ENCODE measurements at regions of chr14 and their contacts with region 1.

Region 1: DNA sequence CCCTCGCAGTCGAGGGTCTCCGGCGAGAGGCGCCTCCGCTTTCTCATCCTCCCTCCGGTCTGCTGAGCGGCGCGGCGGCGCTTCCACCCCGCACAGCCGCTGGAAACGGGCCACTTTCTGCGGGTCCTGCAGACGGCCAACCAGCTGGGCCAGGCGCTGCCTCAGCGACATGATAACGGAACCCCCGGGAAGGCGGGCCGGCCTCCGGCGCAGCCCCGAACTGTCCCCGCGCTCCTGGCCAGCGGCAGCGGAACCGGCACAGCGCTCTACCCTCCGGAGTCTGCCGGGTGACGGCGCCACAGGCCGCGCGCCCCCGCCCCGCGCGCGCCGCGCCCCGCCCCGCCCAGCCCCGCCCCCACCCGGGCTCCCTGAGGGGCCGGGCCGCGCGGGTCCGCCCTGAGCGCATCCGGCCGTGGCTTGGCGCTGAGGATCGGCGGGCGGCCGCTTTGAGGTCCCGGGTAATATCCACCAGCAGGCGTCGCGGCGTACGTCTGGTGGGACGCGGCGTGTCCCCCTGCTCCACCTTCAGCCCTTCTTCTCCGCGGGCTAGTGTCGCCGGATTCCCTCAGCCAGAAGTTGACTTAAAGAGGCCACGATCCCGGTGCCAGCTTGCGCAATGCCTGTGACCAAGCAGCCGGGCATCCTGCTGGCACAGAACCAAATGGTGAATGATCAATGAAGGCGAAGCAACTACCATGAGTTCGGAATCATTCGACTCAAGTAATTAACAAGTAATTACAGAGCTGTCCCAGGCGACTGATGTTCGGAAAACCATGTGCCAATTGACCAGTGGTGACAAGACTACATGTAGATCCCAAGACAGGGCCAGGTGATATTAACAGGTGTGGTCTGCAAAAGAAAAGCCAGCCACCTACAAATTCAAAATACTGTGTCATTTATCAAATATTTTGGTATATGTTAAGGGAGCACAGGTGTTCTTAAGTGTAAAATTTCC is at the start of gene SGPP1:
- DNase-seq: peak; percentile 84
- ATAC-seq: peak; percentile 91
- H3K4me3 ChIP-seq: peak within 1 kb of the TSS; percentile 84
- H3K27ac ChIP-seq: peak within 1 kb of the TSS; percentile 58
- H3K4me1 ChIP-seq: peaks cover 20% of the 10 kb centered on the region
- H3K27me3 ChIP-seq: no peaks in the 10 kb centered on the region
- CTCF ChIP-seq: peak; percentile 32; the same call in 1 of the 2 replicates
- total RNA-seq, gene SGPP1: 15.9 and 19.3 TPM in 2 replicates

Region 2: GRCh38 chr14:63632932-63633514 is 95.0 kb before region 1 on chr14:
- CTCF ChIA-PET with region 1: interaction called, 3 read pairs
- POLR2A ChIA-PET with region 1: interaction called, 4 read pairs
- intact Hi-C with region 1: loop called (anchors 2 kb)
- DNase-seq: peak; percentile 71
- ATAC-seq: peak; percentile 88
- H3K4me3 ChIP-seq: no peak overlapping the region
- H3K27ac ChIP-seq: no peak overlapping the region
- H3K4me1 ChIP-seq: 0 out of 2 replicates have a peak, but pooled peaks cover 4% of the 10 kb centered on the region
- H3K27me3 ChIP-seq: no peaks in the 10 kb centered on the region
- CTCF ChIP-seq: peak; percentile 82

Region 3: DNA sequence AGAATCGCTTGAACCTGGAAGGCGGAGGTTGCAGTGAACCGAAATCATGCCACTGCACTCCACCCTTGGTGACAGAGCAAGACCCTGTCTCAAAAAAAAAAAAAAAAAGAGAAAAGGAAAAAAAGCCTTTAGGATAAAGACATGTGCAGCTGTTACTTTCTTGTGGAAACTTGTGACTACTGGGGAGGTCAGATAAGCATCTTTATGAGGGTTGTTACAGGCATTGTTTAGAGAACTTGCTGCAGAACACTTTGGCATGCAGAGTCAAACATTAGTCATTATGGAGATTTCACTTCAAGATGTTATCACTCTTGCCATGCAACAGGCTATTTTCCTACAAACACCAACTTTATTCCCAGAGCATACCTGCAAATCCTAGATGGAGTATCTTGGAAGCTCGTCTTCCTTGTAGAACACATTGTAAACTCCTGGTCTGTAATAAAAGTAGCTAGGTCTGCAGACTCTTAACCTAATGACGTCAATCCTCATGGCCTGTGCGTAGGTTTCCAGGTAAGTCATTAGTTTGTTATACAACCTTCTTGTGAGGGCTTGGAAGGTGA is 50.1 kb before region 1 on chr14:
- CTCF ChIA-PET with region 1: no interaction called
- POLR2A ChIA-PET with region 1: no interaction called
- intact Hi-C with region 1: loop called (anchors 1 kb)
- DNase-seq: peak; percentile 96
- ATAC-seq: peak; percentile 92
- H3K4me3 ChIP-seq: peak overlapping the region; percentile 28
- H3K27ac ChIP-seq: peak overlapping the region; percentile 94
- H3K4me1 ChIP-seq: peaks cover 23% of the 10 kb centered on the region
- H3K27me3 ChIP-seq: no peaks in the 10 kb centered on the region
- CTCF ChIP-seq: no peak

Region 4: GRCh38 chr14:63705561-63706070 is 22.4 kb before region 1 on chr14:
- CTCF ChIA-PET with region 1: no interaction called
- POLR2A ChIA-PET with region 1: interaction called, 10 read pairs
- intact Hi-C with region 1: no loop called
- DNase-seq: no peak
- ATAC-seq: no peak
- H3K4me3 ChIP-seq: no peak overlapping the region
- H3K27ac ChIP-seq: no peak overlapping the region
- H3K4me1 ChIP-seq: no peaks in the 10 kb centered on the region
- H3K27me3 ChIP-seq: no peaks in the 10 kb centered on the region
- CTCF ChIP-seq: no peak

Region 5: DNA sequence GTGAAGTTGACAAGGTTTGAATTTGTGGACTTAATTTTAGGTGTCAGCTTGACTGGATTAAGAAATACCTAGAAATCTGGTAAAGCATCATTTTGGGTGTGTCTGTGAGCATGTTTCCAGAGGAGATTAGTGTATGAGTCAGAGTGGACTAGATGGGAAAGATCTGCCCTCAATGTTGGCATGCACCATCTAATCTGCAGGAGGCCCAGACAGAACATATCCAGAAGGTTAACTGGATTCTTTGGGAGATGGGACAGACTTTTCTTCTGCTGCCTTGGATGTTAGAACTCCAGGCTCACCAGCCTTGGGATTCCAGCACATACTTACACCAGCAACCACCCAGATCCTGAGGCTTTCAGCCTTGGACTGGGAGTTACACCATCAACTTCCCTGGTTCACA is 14.3 kb before region 1 on chr14:
- CTCF ChIA-PET with region 1: no interaction called
- POLR2A ChIA-PET with region 1: interaction called, 10 read pairs
- intact Hi-C with region 1: no loop called
- DNase-seq: peak; percentile 76
- ATAC-seq: peak; percentile 97
- H3K4me3 ChIP-seq: no peak overlapping the region
- H3K27ac ChIP-seq: peak overlapping the region; percentile 72
- H3K4me1 ChIP-seq: peaks cover 15% of the 10 kb centered on the region
- H3K27me3 ChIP-seq: no peaks in the 10 kb centered on the region
- CTCF ChIP-seq: no peak

Region 6: DNA sequence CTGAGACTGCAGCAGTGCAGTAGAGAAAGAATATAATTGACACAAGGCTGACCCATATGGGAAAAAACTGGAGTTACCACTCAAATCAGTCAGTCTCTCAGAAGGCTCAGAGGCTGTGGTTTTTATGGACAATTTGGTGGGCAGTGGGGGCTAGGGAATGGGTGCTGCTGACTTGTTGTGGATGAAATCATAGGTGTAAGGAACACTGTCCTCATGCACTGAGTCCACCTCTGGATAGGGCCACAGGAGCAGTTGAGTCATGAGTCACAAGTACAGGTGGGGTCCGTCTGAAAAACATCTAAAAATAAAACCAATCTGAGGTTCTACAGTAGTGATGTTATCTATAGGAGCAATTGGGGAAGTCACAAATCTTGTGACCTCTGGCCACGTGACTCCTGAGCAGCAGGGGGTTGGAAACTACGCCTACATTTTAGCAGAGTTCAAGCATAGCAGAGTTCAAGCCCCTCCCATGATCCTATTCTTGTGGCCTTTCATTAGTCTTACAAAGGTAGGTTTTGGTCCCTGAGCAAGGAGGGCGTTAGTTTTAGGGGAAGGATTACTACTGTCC is 17.9 kb after region 1 on chr14:
- CTCF ChIA-PET with region 1: interaction called, 18 read pairs
- POLR2A ChIA-PET with region 1: no interaction called
- intact Hi-C with region 1: no loop called
- DNase-seq: no peak
- ATAC-seq: peak; percentile 50
- H3K4me3 ChIP-seq: no peak overlapping the region
- H3K27ac ChIP-seq: no peak overlapping the region
- H3K4me1 ChIP-seq: no peaks in the 10 kb centered on the region
- H3K27me3 ChIP-seq: no peaks in the 10 kb centered on the region
- CTCF ChIP-seq: no peak

Region 7: GRCh38 chr14:63752513-63753169 is 24.6 kb after region 1 on chr14:
- CTCF ChIA-PET with region 1: interaction called, 18 read pairs
- POLR2A ChIA-PET with region 1: interaction called, 3 read pairs
- intact Hi-C with region 1: loop called (anchors 1 kb)
- DNase-seq: peak; percentile 96
- ATAC-seq: peak; percentile 96
- H3K4me3 ChIP-seq: peak overlapping the region; percentile 53
- H3K27ac ChIP-seq: peak overlapping the region; percentile 93
- H3K4me1 ChIP-seq: peaks cover 10% of the 10 kb centered on the region
- H3K27me3 ChIP-seq: no peaks in the 10 kb centered on the region
- CTCF ChIP-seq: no peak

Region 8: DNA sequence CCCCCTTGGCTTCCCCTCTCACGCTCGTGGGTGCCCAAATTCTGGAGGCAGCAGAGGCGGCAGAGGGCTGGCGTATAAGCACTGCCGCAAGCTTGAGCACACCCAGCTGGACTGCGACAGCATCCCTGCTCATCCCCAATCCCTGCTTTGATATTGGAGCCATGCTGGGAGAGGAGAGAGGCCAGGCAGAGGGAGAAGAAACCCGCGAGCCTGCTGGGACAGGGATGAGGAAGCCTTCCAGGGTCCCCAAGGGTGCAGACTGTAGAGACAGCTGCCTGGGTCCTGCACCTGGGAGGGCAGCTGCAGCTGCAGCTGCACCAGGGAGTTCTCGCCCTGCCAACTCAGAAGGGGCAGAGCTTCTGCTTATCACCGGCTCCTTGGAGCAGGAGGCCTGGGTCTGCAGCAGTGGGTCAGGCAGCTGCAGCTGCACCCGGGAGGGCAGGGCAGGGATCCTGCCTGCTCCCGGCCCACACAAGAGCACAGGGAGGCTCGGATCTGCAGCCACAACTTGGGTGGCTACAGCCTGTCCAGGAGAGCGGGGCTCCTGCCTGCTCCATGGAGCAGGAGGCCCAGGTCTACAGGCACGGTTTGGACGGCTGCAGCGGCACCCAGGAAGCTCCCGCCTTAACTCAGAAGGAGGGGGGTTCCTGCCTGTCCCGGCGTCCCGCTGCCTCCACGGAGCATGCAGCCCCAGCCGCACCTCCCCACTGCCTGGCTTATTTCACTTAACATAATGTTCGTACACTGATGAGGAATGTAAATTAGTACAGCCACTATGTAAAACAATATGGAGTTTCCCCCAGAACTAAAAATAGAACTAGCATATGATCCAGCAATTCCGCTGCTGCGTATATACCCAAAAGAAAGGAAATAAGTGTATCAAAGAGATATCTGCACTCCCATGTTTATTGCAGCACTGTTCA is 60.2 kb after region 1 on chr14:
- CTCF ChIA-PET with region 1: no interaction called
- POLR2A ChIA-PET with region 1: no interaction called
- intact Hi-C with region 1: no loop called
- DNase-seq: no peak
- ATAC-seq: no peak
- H3K4me3 ChIP-seq: no peak overlapping the region
- H3K27ac ChIP-seq: no peak overlapping the region
- H3K4me1 ChIP-seq: no peaks in the 10 kb centered on the region
- H3K27me3 ChIP-seq: no peaks in the 10 kb centered on the region
- CTCF ChIP-seq: no peak

Region 9: DNA sequence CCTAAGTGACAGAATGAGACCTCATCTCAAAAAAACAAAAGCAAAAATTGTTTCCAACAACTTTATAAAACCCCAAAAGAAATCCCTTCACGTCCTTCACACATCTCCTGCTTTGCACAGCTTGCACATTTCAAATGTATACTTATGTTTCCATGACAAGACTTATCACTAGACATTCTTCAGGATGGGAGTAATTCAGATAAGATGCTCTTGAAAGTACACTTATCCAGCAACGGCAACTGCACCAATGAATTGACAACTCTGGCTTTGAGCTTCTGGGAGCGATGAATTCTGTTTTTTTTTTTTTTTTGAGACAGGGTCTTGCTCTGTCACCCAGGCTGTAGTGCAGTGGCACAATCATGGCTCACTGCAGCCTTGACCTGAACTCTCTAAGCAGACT is 706.5 kb after region 1 on chr14:
- CTCF ChIA-PET with region 1: no interaction called
- POLR2A ChIA-PET with region 1: no interaction called
- intact Hi-C with region 1: no loop called
- DNase-seq: no peak
- ATAC-seq: no peak
- H3K4me3 ChIP-seq: no peak overlapping the region
- H3K27ac ChIP-seq: no peak overlapping the region
- H3K4me1 ChIP-seq: peaks cover 11% of the 10 kb centered on the region
- H3K27me3 ChIP-seq: no peaks in the 10 kb centered on the region
- CTCF ChIP-seq: no peak

Measured in PC-3 (cell line).